Calu3 (cell line): ENCODE measurements at regions of chr1 and their contacts with region 1.

Region 1: GRCh38 chr1:22704440-22705067 is 6.1 kb upstream of the EPHB2 start:
- DNase-seq: peak; percentile 86
- H3K4me3 Mint-ChIP-seq: no peak overlapping the region
- H3K27ac Mint-ChIP-seq: no peak overlapping the region
- H3K4me1 Mint-ChIP-seq: no peaks in the 10 kb centered on the region
- H3K27me3 Mint-ChIP-seq: no peaks in the 10 kb centered on the region
- CTCF ChIP-seq: peak; percentile 78

Region 2: DNA sequence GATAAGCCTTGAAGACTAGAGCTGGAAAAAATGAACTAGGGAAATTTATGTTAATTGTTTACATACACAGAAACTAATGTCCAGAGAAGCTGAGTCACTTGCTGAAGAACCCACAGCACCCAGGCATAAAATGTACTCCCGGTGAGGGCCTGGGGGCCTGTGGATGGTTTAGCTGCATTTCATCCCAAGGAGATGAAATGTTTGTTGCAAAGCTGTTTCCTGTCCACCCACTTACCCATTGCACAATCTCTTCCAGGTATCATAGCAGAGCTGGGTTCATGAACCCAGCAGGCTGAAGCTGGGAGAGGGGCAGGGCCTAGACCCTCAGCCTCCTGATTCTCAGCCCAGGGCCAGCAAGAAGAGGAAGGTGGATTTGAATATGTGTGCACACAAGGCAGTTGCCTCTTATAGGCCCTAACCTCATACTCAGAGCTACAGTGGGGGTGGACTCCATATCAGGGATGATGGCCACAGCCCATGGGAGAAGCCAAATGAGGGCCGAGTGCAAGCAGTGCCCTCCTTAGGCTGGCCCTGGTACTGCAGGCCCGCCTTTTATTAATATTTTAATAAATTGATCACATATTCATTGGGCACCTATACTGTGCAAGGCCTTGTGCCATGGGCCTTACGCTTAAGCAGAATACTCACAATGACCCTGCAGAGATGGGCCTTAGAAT is 157.3 kb after region 1 on chr1:
- CTCF ChIA-PET with region 1: interaction called, 28 read pairs
- intact Hi-C with region 1: no loop called
- DNase-seq: peak; percentile 66
- H3K4me3 Mint-ChIP-seq: no peak overlapping the region
- H3K27ac Mint-ChIP-seq: no peak overlapping the region
- H3K4me1 Mint-ChIP-seq: no peaks in the 10 kb centered on the region
- H3K27me3 Mint-ChIP-seq: no peaks in the 10 kb centered on the region
- CTCF ChIP-seq: peak; percentile 66

Region 3: DNA sequence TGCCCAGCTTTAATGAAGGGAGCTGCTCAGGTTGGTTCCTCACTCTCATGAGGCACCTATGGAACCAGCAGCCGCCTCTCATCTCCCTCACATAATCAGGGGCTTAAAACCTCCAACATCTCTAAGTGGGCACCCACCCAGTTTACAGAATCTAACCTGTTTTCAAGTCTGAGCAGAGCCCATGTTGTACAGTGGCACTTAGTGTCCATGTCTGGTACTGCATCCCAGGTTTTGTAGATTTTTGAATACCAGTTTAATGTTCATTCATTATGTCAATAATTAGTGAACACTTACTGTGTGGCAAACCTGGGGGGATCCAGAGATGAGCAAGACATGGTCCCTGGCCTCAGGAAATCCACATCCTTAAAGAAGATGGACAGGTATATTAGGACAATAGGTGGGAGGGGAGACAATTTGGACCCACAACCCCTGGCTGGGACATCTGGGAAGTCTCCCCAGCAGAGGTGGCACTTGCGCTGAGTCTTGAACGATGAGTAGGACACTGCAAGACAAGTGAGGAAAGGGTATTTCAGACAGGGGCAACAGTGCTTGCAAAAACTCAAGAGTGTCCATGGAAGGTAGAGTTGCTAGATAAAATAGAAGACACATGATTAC is 184.8 kb after region 1 on chr1:
- CTCF ChIA-PET with region 1: interaction called, 16 read pairs
- intact Hi-C with region 1: loop called (anchors 1 kb)
- DNase-seq: peak; percentile 19
- H3K4me3 Mint-ChIP-seq: no peak overlapping the region
- H3K27ac Mint-ChIP-seq: no peak overlapping the region
- H3K4me1 Mint-ChIP-seq: no peaks in the 10 kb centered on the region
- H3K27me3 Mint-ChIP-seq: no peaks in the 10 kb centered on the region
- CTCF ChIP-seq: peak; percentile 68

Region 4: DNA sequence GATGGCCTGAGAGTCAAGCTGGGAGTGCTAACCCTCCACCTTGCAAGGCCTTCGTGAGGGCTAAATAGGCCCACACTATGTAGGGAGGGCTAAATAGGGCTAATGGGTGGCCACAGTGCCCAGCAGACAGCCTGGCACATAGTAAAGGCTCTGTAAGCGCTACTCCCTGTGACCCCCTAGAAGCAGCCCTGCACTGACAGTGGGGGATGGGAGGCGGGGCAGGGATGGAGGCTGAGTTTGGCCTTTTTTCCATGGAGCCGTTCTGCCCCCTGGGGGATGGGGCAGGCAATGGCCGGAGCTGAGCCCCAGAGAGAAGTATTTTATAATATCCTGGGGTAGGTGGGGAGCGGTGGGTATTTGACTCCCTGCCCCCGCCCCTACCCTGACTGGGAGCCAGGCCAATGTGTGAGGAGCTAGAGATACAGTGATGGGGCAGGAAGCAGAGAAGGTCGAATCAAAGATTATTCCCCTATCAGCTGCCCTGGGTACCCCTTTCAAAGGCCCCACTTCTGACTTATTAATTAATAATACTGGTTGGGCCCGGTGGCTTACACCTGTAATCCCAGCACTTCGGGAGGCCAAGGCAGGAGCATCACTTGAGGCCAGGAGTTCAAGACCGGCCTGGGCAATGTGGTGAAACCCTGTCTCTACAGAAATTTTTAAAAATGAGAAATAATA is 225.8 kb after region 1 on chr1:
- CTCF ChIA-PET with region 1: interaction called, 11 read pairs
- intact Hi-C with region 1: no loop called
- DNase-seq: peak; percentile 72
- H3K4me3 Mint-ChIP-seq: no peak overlapping the region
- H3K27ac Mint-ChIP-seq: no peak overlapping the region
- H3K4me1 Mint-ChIP-seq: no peaks in the 10 kb centered on the region
- H3K27me3 Mint-ChIP-seq: peaks cover 43% of the 10 kb centered on the region
- CTCF ChIP-seq: peak; percentile 74

Region 5: GRCh38 chr1:22969304-22969709 is 264.8 kb after region 1 on chr1:
- CTCF ChIA-PET with region 1: no interaction called
- intact Hi-C with region 1: no loop called
- DNase-seq: no peak
- H3K4me3 Mint-ChIP-seq: no peak overlapping the region
- H3K27ac Mint-ChIP-seq: no peak overlapping the region
- H3K4me1 Mint-ChIP-seq: peaks cover 10% of the 10 kb centered on the region
- H3K27me3 Mint-ChIP-seq: peaks cover 75% of the 10 kb centered on the region
- CTCF ChIP-seq: no peak